ENCODE measurements at regions of chr16 and their contacts with region 1.

Region 1: GRCh38 chr16:24800586-24800985 is 45.2 kb upstream of the SLC5A11 start:
- DNase-seq: peak; percentile 51
- H3K4me3 Mint-ChIP-seq: no peak overlapping the region
- H3K27ac Mint-ChIP-seq: peak overlapping the region; percentile 16
- H3K4me1 Mint-ChIP-seq: no peaks in the 10 kb centered on the region
- H3K27me3 Mint-ChIP-seq: no peaks in the 10 kb centered on the region
- CTCF ChIP-seq: peak; percentile 53

Region 2: GRCh38 chr16:24516900-24517669 is 283.5 kb before region 1 on chr16:
- CTCF ChIA-PET with region 1: interaction called, 7 read pairs
- POLR2A ChIA-PET with region 1: no interaction called
- intact Hi-C with region 1: loop called (anchors 5 kb)
- DNase-seq: peak; percentile 86
- H3K4me3 Mint-ChIP-seq: peak overlapping the region; percentile 39
- H3K27ac Mint-ChIP-seq: no peak overlapping the region
- H3K4me1 Mint-ChIP-seq: peaks cover 6% of the 10 kb centered on the region
- H3K27me3 Mint-ChIP-seq: no peaks in the 10 kb centered on the region
- CTCF ChIP-seq: peak; percentile 87

Region 3: DNA sequence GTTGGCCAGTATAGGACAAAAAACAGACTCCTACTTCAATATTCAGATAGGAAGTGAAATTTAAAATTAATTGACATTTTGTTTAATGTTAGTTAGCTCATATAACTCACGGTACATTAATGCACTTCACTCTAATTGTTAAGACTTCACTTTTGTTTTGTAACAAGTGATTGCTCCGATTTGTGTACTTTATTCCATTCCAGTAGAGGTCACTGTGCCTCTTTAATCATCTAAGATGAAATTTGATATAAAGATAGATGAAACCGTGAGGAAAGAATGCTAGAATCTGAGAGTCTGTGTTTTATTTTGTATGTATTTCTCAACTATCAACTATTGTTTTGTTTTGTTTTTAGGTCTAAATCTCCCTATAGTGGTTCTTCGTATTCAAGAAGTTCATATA is 232.2 kb before region 1 on chr16:
- CTCF ChIA-PET with region 1: interaction called, 12 read pairs
- POLR2A ChIA-PET with region 1: interaction called, 3 read pairs
- intact Hi-C with region 1: no loop called
- DNase-seq: peak; percentile 26
- H3K4me3 Mint-ChIP-seq: no peak overlapping the region
- H3K27ac Mint-ChIP-seq: no peak overlapping the region
- H3K4me1 Mint-ChIP-seq: no peaks in the 10 kb centered on the region
- H3K27me3 Mint-ChIP-seq: no peaks in the 10 kb centered on the region
- CTCF ChIP-seq: peak; percentile 20

Region 4: DNA sequence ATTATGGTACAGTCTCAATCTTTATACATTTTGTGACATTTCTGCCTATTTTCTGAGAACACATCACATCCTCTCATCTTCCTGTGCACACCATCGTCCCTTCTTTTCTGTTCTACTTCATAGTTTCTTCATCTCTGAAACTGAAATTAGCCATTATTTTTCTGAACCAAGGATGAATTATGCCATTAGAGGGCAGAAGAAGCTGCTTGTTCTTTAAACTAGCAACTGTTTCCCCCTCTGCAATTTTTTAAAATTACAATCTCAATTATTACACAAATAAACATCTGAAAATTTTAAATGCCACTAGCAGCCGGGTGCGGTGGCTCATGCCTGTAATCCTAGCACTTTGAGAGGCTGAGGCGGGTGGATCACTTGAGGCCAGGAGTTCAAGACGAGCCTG is 219.9 kb before region 1 on chr16:
- CTCF ChIA-PET with region 1: interaction called, 65 read pairs
- POLR2A ChIA-PET with region 1: interaction called, 6 read pairs
- intact Hi-C with region 1: loop called (anchors 1 kb)
- DNase-seq: peak; percentile 35
- H3K4me3 Mint-ChIP-seq: no peak overlapping the region
- H3K27ac Mint-ChIP-seq: peak overlapping the region; percentile 27
- H3K4me1 Mint-ChIP-seq: peaks cover 10% of the 10 kb centered on the region
- H3K27me3 Mint-ChIP-seq: no peaks in the 10 kb centered on the region
- CTCF ChIP-seq: peak; percentile 59

Region 5: GRCh38 chr16:24670623-24671454 is 129.7 kb before region 1 on chr16:
- CTCF ChIA-PET with region 1: interaction called, 4 read pairs
- POLR2A ChIA-PET with region 1: no interaction called
- intact Hi-C with region 1: loop called (anchors 1 kb)
- DNase-seq: peak; percentile 29
- H3K4me3 Mint-ChIP-seq: no peak overlapping the region
- H3K27ac Mint-ChIP-seq: peak overlapping the region; percentile 82
- H3K4me1 Mint-ChIP-seq: peaks cover 14% of the 10 kb centered on the region
- H3K27me3 Mint-ChIP-seq: no peaks in the 10 kb centered on the region
- CTCF ChIP-seq: no peak

Region 6: GRCh38 chr16:24810951-24811843 is 10.6 kb after region 1 on chr16:
- CTCF ChIA-PET with region 1: interaction called, 24 read pairs
- POLR2A ChIA-PET with region 1: interaction called, 3 read pairs
- intact Hi-C with region 1: no loop called
- DNase-seq: no peak
- H3K4me3 Mint-ChIP-seq: no peak overlapping the region
- H3K27ac Mint-ChIP-seq: no peak overlapping the region
- H3K4me1 Mint-ChIP-seq: no peaks in the 10 kb centered on the region
- H3K27me3 Mint-ChIP-seq: no peaks in the 10 kb centered on the region
- CTCF ChIP-seq: no peak

Region 7: DNA sequence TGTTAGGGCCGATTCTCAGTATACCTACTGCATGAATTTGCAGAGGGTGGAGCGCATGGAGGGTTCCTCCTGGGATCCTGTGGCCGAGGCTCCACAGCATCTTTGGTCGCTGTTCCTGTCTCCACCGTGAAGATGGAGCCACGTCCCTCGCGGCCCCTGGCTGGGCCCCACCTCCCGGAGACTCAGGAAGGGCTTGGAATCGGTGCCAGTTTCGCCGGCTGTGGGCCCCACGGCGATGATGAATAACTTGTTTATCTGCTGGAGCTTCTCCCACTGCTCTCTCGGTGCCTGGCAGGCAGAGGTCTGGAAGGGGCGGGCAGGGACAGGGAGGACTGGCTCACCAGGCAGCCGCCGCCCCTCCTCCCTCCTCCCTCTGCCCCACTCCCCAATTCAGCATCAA is 53.2 kb after region 1 on chr16:
- CTCF ChIA-PET with region 1: no interaction called
- POLR2A ChIA-PET with region 1: no interaction called
- intact Hi-C with region 1: no loop called
- DNase-seq: peak; percentile 78
- H3K4me3 Mint-ChIP-seq: no peak overlapping the region
- H3K27ac Mint-ChIP-seq: peak overlapping the region; percentile 33
- H3K4me1 Mint-ChIP-seq: peaks cover 18% of the 10 kb centered on the region
- H3K27me3 Mint-ChIP-seq: no peaks in the 10 kb centered on the region
- CTCF ChIP-seq: no peak